MCF 10A (cell line): ENCODE measurements at regions of chr5 and their contacts with region 1.

Region 1: GRCh38 chr5:132526290-132526973 is 16.9 kb downstream of the IL5 start:
- DNase-seq: peak; percentile 83
- H3K4me3 Mint-ChIP-seq: no peak overlapping the region
- H3K27ac Mint-ChIP-seq: no peak overlapping the region
- H3K4me1 Mint-ChIP-seq: no peaks in the 10 kb centered on the region
- H3K27me3 Mint-ChIP-seq: peaks cover 23% of the 10 kb centered on the region
- CTCF ChIP-seq: peak; percentile 96

Region 2: GRCh38 chr5:132506094-132506692 is 20.2 kb before region 1 on chr5:
- CTCF ChIA-PET with region 1: interaction called, 25 read pairs
- POLR2A ChIA-PET with region 1: interaction called, 4 read pairs
- intact Hi-C with region 1: no loop called
- DNase-seq: peak; percentile 78
- H3K4me3 Mint-ChIP-seq: no peak overlapping the region
- H3K27ac Mint-ChIP-seq: no peak overlapping the region
- H3K4me1 Mint-ChIP-seq: peaks cover 23% of the 10 kb centered on the region
- H3K27me3 Mint-ChIP-seq: no peaks in the 10 kb centered on the region
- CTCF ChIP-seq: peak; percentile 47

Region 3: GRCh38 chr5:132546108-132546507 is 19.7 kb after region 1 on chr5:
- CTCF ChIA-PET with region 1: interaction called, 29 read pairs
- POLR2A ChIA-PET with region 1: no interaction called
- intact Hi-C with region 1: no loop called
- DNase-seq: no peak
- H3K4me3 Mint-ChIP-seq: no peak overlapping the region
- H3K27ac Mint-ChIP-seq: no peak overlapping the region
- H3K4me1 Mint-ChIP-seq: no peaks in the 10 kb centered on the region
- H3K27me3 Mint-ChIP-seq: peaks cover 33% of the 10 kb centered on the region
- CTCF ChIP-seq: no peak

Region 4: DNA sequence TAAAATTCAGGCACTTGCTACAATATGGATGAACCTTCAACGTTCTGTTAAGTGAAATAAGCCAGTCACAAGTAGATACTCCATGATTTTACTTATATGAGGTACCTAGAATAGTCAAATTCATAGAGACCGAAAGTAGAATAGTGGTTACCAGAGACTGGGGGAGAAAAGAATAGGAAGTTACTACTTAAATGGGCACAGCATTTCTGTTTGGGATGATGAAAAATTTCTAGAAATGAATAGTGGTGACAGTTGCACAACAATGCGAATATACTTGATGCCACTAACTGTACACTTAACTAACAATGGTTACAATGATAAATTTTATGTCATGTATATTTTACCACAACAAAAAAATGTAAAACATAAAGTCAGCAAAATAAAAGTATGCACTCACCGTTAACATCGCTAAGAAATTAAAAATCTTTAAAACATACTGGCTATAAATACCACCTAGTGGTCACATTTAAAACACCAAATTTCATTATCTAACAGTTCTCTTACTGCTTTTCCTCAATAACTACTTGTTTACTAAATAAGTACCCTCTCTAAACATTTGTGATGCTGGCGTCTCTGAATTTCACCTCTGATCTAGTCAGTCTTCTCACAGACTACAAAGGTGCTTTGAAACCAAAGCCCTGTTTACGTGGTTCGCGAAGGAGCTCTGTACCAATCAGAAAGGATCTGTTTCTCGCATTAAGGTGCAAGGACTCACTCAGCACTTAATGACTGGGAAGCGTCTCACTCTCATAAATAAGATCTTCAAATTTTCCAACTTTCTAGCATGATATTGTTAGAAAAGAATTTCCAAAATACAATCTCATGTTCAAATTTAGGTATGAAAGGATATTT is 188.2 kb after region 1 on chr5:
- CTCF ChIA-PET with region 1: interaction called, 3 read pairs
- POLR2A ChIA-PET with region 1: no interaction called
- intact Hi-C with region 1: loop called (anchors 1 kb)
- DNase-seq: no peak
- H3K4me3 Mint-ChIP-seq: no peak overlapping the region
- H3K27ac Mint-ChIP-seq: no peak overlapping the region
- H3K4me1 Mint-ChIP-seq: no peaks in the 10 kb centered on the region
- H3K27me3 Mint-ChIP-seq: no peaks in the 10 kb centered on the region
- CTCF ChIP-seq: peak; percentile 50

Region 5: DNA sequence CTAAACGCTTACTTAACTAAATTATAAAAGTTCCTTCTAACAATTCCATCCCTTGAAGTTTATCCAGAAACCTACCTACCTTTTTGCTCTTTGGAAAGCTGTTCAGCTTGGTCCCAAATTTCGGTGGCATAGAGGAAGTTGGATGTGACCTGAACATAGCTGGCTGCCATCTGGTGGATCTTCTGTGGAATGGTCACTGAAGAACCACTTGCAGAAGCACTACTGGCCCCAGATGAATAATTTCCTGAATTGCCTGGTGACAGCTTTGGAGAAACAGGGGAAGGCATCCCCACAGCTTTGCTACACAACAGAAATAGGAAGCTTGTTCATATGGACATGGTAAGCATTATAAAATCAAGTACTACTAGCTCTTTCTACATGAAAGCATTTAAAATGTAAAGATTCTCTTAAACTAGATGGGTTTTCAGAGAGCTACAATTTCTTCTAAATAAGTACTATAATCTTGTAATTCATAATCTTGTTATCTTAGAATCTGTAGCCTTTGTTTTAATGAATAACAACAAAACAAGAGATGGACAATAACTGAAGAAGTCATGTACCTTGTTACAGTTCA is 356.9 kb after region 1 on chr5:
- CTCF ChIA-PET with region 1: interaction called, 21 read pairs
- POLR2A ChIA-PET with region 1: no interaction called
- intact Hi-C with region 1: loop called (anchors 1 kb)
- DNase-seq: peak; percentile 80
- H3K4me3 Mint-ChIP-seq: no peak overlapping the region
- H3K27ac Mint-ChIP-seq: no peak overlapping the region
- H3K4me1 Mint-ChIP-seq: peaks cover 8% of the 10 kb centered on the region
- H3K27me3 Mint-ChIP-seq: no peaks in the 10 kb centered on the region
- CTCF ChIP-seq: peak; percentile 70

Region 6: GRCh38 chr5:133360693-133361472 is 834.5 kb after region 1 on chr5:
- CTCF ChIA-PET with region 1: no interaction called
- POLR2A ChIA-PET with region 1: no interaction called
- intact Hi-C with region 1: no loop called
- DNase-seq: no peak
- H3K4me3 Mint-ChIP-seq: no peak overlapping the region
- H3K27ac Mint-ChIP-seq: no peak overlapping the region
- H3K4me1 Mint-ChIP-seq: no peaks in the 10 kb centered on the region
- H3K27me3 Mint-ChIP-seq: peaks cover 2% of the 10 kb centered on the region
- CTCF ChIP-seq: no peak